PC-9 (cell line): ENCODE measurements at regions of chr7 and their contacts with region 1.

Region 1: GRCh38 chr7:16594061-16594460 is 51.5 kb downstream of the ANKMY2 start:
- DNase-seq: no peak
- H3K4me3 ChIP-seq: no peak overlapping the region
- H3K27ac ChIP-seq: no peak overlapping the region
- H3K4me1 ChIP-seq: 0 out of 2 replicates have a peak, but pooled peaks cover 3% of the 10 kb centered on the region
- H3K27me3 ChIP-seq: no peaks in the 10 kb centered on the region
- CTCF ChIP-seq: no peak

Region 2: DNA sequence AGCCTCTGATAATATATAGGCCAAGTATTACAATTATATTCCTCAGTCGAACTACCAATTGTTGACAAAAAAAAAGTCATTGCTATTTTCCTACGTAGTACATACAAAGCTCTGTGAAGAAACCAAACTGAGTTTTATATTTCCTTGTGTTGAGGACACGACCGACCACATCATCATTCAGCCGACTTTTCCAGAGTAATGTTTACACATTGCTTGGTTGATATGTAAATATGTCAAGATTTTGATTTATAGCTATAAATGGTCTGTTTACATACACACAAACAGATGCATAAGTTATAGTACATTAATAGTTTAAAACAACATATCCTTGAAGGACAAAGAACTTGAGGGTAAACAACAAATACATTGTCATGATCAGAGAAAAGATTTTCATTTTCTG is 294.2 kb before region 1 on chr7:
- CTCF ChIA-PET with region 1: no interaction called
- POLR2A ChIA-PET with region 1: no interaction called
- intact Hi-C with region 1: no loop called
- DNase-seq: no peak
- H3K4me3 ChIP-seq: no peak overlapping the region
- H3K27ac ChIP-seq: no peak overlapping the region
- H3K4me1 ChIP-seq: no peaks in the 10 kb centered on the region
- H3K27me3 ChIP-seq: no peaks in the 10 kb centered on the region
- CTCF ChIP-seq: no peak

Region 3: DNA sequence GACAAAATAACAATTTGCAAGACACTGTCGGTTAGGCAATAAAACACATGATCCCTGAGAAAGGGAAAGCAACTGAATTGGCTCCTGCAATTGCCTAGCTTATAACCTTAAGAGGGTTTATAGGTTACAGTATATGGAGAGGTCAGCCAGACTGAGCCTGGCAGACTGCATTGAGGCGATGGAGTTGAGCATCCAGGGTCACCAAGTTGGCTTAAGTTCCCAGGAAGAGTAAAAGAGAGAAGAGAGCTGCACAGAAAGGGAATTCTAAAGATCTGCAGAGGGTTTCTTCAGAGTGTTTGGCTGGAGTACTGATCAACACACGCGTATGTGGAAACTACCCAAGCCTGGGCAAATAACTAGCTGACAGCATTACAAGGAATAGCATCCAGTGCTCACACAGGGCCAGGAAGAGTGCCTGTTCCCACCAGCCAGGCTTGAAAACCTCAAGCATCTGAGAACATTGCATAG is 40.2 kb after region 1 on chr7:
- CTCF ChIA-PET with region 1: no interaction called
- POLR2A ChIA-PET with region 1: no interaction called
- intact Hi-C with region 1: no loop called
- DNase-seq: no peak
- H3K4me3 ChIP-seq: no peak overlapping the region
- H3K27ac ChIP-seq: no peak overlapping the region
- H3K4me1 ChIP-seq: peaks cover 8% of the 10 kb centered on the region
- H3K27me3 ChIP-seq: no peaks in the 10 kb centered on the region
- CTCF ChIP-seq: no peak

Region 4: GRCh38 chr7:17275749-17276671 is 681.9 kb after region 1 on chr7:
- CTCF ChIA-PET with region 1: interaction called, 13 read pairs
- POLR2A ChIA-PET with region 1: no interaction called
- intact Hi-C with region 1: no loop called
- DNase-seq: peak in 1 of 2 experiments; percentile 68
- H3K4me3 ChIP-seq: no peak overlapping the region
- H3K27ac ChIP-seq: peak overlapping the region; percentile 8; the same call in 1 of the 2 replicates
- H3K4me1 ChIP-seq: peaks cover 5% of the 10 kb centered on the region; the same call in 1 of the 2 replicates
- H3K27me3 ChIP-seq: no peaks in the 10 kb centered on the region
- CTCF ChIP-seq: no peak